Ovary (tissue), 10 donors: ENCODE measurements at regions of chr14 and their contacts with region 1.

Region 1: GRCh38 chr14:56023531-56024135 is 94.6 kb upstream of the PELI2 start:
- DNase-seq: no peak
- H3K4me3 ChIP-seq: no peak overlapping the region
- H3K27ac ChIP-seq: no peak overlapping the region
- H3K4me1 ChIP-seq: peaks cover 4% of the 10 kb centered on the region
- H3K27me3 ChIP-seq: no peaks in the 10 kb centered on the region
- CTCF ChIP-seq: no peak
- EP300 ChIP-seq: no peak
- POLR2A ChIP-seq: no peak

Region 2: GRCh38 chr14:55794655-55795595 is 228.7 kb before region 1 on chr14:
- intact Hi-C with region 1: no loop called
- DNase-seq: no peak
- H3K4me3 ChIP-seq: no peak overlapping the region
- H3K27ac ChIP-seq: no peak overlapping the region
- H3K4me1 ChIP-seq: no peaks in the 10 kb centered on the region
- H3K27me3 ChIP-seq: no peaks in the 10 kb centered on the region
- CTCF ChIP-seq: no peak
- EP300 ChIP-seq: no peak
- POLR2A ChIP-seq: no peak

Region 3: GRCh38 chr14:56004786-56005185 is 18.8 kb before region 1 on chr14:
- intact Hi-C with region 1: loop called in 1 of 4 experiments (anchors 2 kb)
- DNase-seq: peak; percentile 51 to 67 (median 60)
- H3K4me3 ChIP-seq: peak overlapping the region; percentile 17
- H3K27ac ChIP-seq: peak overlapping the region; percentile 61 to 92
- H3K4me1 ChIP-seq: peaks cover 2% of the 10 kb centered on the region
- H3K27me3 ChIP-seq: no peaks in the 10 kb centered on the region
- CTCF ChIP-seq: no peak
- EP300 ChIP-seq: no peak
- POLR2A ChIP-seq: peak; percentile 35